Caco-2 (cell line): ENCODE measurements at regions of chr6 and their contacts with region 1.

Region 1: GRCh38 chr6:35496841-35497570 is at the start of gene TEAD3:
- DNase-seq: peak; percentile 88 to 89
- H3K4me3 ChIP-seq: peak within 1 kb of the TSS; percentile 91
- H3K4me3 Mint-ChIP-seq: peak within 1 kb of the TSS; percentile 90
- H3K27ac Mint-ChIP-seq: peak within 1 kb of the TSS; percentile 84
- H3K4me1 ChIP-seq: peaks cover 49% of the 10 kb centered on the region
- H3K4me1 Mint-ChIP-seq: peaks cover 19% of the 10 kb centered on the region
- H3K27me3 ChIP-seq: no peaks in the 10 kb centered on the region
- H3K27me3 Mint-ChIP-seq: no peaks in the 10 kb centered on the region
- CTCF ChIP-seq: no peak
- total RNA-seq, gene TEAD3: 51.8 and 57.2 TPM in 2 replicates

Region 2: GRCh38 chr6:35474131-35474940 is 22.7 kb before region 1 on chr6:
- CTCF ChIA-PET with region 1: interaction called, 9 read pairs
- POLR2A ChIA-PET with region 1: interaction called, 18 read pairs
- intact Hi-C with region 1: no loop called
- DNase-seq: no peak
- H3K4me3 ChIP-seq: no peak overlapping the region
- H3K4me3 Mint-ChIP-seq: no peak overlapping the region
- H3K27ac Mint-ChIP-seq: peak overlapping the region; percentile 53
- H3K4me1 ChIP-seq: peaks cover 28% of the 10 kb centered on the region
- H3K4me1 Mint-ChIP-seq: peaks cover 19% of the 10 kb centered on the region
- H3K27me3 ChIP-seq: no peaks in the 10 kb centered on the region
- H3K27me3 Mint-ChIP-seq: no peaks in the 10 kb centered on the region
- CTCF ChIP-seq: no peak

Region 3: GRCh38 chr6:35485402-35485877 is 11.6 kb before region 1 on chr6:
- CTCF ChIA-PET with region 1: interaction called, 3 read pairs
- POLR2A ChIA-PET with region 1: interaction called, 23 read pairs
- intact Hi-C with region 1: loop called (anchors 1 kb)
- DNase-seq: peak; percentile 70 to 79
- H3K4me3 ChIP-seq: peak overlapping the region; percentile 34
- H3K4me3 Mint-ChIP-seq: peak overlapping the region; percentile 67
- H3K27ac Mint-ChIP-seq: peak overlapping the region; percentile 98
- H3K4me1 ChIP-seq: peaks cover 52% of the 10 kb centered on the region
- H3K4me1 Mint-ChIP-seq: peaks cover 41% of the 10 kb centered on the region
- H3K27me3 ChIP-seq: no peaks in the 10 kb centered on the region
- H3K27me3 Mint-ChIP-seq: no peaks in the 10 kb centered on the region
- CTCF ChIP-seq: no peak